PC-3 (cell line): ENCODE measurements at regions of chr19 and their contacts with region 1.

Region 1: GRCh38 chr19:45630493-45630919 is 8.7 kb downstream of the EML2 start:
- DNase-seq: peak; percentile 89
- ATAC-seq: peak; percentile 84
- H3K4me3 ChIP-seq: no peak overlapping the region
- H3K27ac ChIP-seq: peak overlapping the region; percentile 97
- H3K4me1 ChIP-seq: peaks cover 14% of the 10 kb centered on the region
- H3K27me3 ChIP-seq: no peaks in the 10 kb centered on the region
- CTCF ChIP-seq: no peak

Region 2: GRCh38 chr19:45547976-45548609 is 82.4 kb before region 1 on chr19:
- CTCF ChIA-PET with region 1: no interaction called
- POLR2A ChIA-PET with region 1: no interaction called
- intact Hi-C with region 1: no loop called
- DNase-seq: peak; percentile 96
- ATAC-seq: peak; percentile 96
- H3K4me3 ChIP-seq: no peak overlapping the region
- H3K27ac ChIP-seq: peak overlapping the region; percentile 97
- H3K4me1 ChIP-seq: peaks cover 24% of the 10 kb centered on the region
- H3K27me3 ChIP-seq: no peaks in the 10 kb centered on the region
- CTCF ChIP-seq: no peak

Region 3: DNA sequence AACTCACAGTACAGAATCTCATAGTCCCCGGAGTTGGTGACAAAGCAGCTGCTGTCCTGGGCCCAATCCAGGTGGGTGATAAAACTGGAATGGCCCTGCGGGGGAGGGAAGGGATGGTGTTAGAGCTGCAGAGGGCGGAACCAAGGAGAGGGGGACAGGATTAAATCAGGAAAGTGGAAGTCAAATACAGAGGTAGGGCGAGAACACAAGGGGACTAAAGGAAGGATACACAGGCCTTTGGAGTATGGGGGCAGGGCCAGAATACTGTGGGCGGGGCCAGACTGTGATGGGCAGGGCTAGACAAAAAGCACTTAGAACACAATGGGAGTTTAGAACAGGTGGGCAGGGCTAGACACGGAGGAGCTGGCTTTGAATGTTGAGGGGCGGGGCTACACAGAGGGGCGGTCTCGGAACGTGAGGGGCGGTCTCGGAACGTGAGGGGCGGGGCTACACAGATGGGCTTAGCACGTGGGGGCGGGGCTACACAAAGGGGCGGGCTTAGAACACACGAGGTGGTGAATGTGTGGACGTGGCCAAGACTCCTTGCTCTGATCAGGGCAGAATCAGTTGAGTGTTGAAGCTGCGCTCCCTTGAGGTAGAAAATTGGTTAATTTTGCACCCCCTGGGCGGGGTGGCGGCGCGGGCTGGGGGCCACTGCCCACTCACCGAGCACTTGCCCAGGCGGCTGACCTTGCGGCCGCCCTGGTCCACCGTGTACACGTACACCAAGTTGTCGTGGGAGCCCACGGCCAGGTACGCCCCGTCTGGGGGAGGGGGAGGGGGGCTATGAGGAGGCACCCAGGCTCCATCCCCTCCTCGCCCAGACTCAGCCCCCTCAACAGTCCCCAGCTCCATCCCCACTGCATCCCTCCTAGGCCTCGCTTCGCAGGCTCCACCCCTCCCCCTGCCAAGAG is 14.5 kb before region 1 on chr19:
- CTCF ChIA-PET with region 1: interaction called, 3 read pairs
- POLR2A ChIA-PET with region 1: interaction called, 12 read pairs
- intact Hi-C with region 1: loop called (anchors 1 kb)
- DNase-seq: peak; percentile 80
- ATAC-seq: peak; percentile 72
- H3K4me3 ChIP-seq: no peak overlapping the region
- H3K27ac ChIP-seq: peak overlapping the region; percentile 73
- H3K4me1 ChIP-seq: peaks cover 24% of the 10 kb centered on the region
- H3K27me3 ChIP-seq: no peaks in the 10 kb centered on the region
- CTCF ChIP-seq: no peak

Region 4: DNA sequence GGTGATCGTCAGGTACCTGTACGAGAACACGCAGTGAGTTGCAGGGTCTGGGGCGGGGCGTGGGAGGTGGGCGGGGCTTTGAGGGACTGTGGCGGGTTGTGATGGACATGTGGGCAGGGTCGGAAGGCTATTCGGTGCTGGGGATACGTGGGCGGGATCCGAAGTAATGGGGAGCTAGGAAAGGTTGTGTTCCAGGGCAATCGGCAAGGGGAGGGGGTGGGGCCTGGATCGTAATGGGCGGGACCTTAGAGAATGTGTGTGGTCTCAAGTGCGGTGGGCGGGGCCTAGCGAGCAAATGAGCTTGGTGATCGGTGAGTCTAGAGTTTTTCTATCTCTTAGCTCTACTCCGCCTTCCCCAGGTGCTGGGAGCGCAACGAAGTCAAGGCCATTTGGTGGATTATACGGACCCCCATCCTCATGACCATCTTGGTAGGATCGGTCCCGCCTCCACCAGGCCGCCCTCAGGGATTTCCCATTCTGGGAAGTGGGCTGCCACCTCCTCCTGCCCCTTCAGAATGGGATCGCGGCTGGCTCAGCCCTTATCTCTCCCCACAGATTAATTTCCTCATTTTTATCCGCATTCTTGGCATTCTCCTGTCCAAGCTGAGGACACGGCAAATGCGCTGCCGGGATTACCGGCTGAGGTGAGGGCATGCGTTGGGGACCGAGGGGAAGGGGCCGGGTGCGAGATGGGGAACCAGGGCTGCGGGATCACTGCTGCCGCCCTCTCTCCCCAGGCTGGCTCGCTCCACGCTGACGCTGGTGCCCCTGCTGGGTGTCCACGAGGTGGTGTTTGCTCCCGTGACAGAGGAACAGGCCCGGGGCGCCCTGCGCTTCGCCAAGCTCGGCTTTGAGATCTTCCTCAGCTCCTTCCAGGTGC is 47.1 kb after region 1 on chr19:
- CTCF ChIA-PET with region 1: no interaction called
- POLR2A ChIA-PET with region 1: interaction called, 10 read pairs
- intact Hi-C with region 1: no loop called
- DNase-seq: peak; percentile 92
- ATAC-seq: peak; percentile 78
- H3K4me3 ChIP-seq: peak overlapping the region; percentile 68
- H3K27ac ChIP-seq: no peak overlapping the region
- H3K4me1 ChIP-seq: peaks cover 7% of the 10 kb centered on the region; the same call in 1 of the 2 replicates
- H3K27me3 ChIP-seq: no peaks in the 10 kb centered on the region
- CTCF ChIP-seq: no peak